Activated CD4-positive, alpha-beta T cell treated with anti-CD3 and anti-CD28 coated beads for 36 hours (primary cell): ENCODE measurements at regions of chr3 and their contacts with region 1.

Region 1: DNA sequence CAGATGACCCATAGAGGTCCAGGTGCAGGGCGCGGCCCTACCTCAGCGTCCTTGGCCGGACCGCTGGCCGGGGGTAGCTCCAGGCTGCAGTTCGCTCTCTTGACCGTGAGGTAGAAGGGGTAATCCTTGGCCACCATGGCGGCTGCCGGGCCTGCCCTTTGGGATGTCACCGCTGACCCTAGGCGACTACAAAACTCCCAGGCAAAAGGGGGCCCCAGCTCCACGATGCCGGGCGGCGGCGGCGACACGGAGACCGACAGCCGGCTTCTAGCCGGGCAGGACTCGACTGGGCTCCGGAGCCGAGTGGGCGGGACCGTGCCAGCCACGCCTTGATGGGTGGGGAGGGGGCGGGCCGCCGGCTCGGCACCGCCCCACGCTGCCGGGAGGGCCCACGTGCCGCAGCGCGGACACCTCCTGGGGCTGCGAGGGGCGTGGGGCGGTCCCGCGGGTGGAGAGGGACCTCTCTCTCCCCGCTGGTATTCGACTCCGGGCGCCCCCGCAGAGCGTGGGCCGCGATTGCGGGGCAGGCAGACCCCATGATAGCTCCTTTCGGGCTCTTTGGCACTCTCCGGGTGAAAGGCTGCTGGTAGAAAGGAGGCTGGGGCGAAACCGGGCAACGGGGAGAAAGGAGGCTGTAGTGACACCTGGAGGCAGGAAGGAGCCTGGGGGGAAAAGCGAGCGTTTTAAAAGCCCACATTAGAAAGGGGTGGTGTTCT is at the start of gene ARHGEF3:
- DNase-seq: peak; percentile 94
- ATAC-seq: peak; percentile 78
- H3K4me3 Mint-ChIP-seq: peak within 1 kb of the TSS; percentile 92
- H3K27ac Mint-ChIP-seq: peak within 1 kb of the TSS; percentile 86
- H3K4me1 Mint-ChIP-seq: peaks cover 32% of the 10 kb centered on the region
- H3K27me3 Mint-ChIP-seq: no peaks in the 10 kb centered on the region
- total RNA-seq, gene ARHGEF3: 34.4 to 38.3 TPM

Region 2: DNA sequence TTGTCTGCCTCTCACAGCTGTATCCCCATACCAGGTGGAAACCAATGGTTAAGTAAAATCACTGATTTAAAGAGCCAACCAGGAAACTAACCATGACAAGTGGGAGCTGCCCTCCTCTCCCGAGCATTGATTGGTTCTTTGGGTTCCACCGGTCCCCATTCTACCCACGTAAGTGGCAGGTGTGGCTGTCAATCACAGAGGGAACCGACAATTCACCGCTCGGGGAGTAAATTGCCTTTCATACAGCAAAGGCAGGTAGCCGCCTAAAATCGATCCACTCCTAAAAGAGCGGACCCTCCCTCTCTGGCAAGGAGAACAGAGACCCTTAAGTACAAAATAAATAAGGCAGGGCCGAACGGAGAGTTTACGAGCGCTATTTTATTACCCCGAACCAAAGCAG is 334.7 kb before region 1 on chr3:
- CTCF ChIA-PET with region 1: no interaction called
- POLR2A ChIA-PET with region 1: no interaction called
- intact Hi-C with region 1: no loop called
- DNase-seq: peak; percentile 70
- ATAC-seq: peak; percentile 86
- H3K4me3 Mint-ChIP-seq: peak overlapping the region; percentile 67
- H3K27ac Mint-ChIP-seq: no peak overlapping the region
- H3K4me1 Mint-ChIP-seq: peaks cover 4% of the 10 kb centered on the region
- H3K27me3 Mint-ChIP-seq: peaks cover 50% of the 10 kb centered on the region

Region 3: GRCh38 chr3:56702490-56703315 is 99.1 kb before region 1 on chr3:
- CTCF ChIA-PET with region 1: interaction called, 217 read pairs
- POLR2A ChIA-PET with region 1: interaction called, 3 read pairs
- intact Hi-C with region 1: loop called (anchors 1 kb)
- DNase-seq: peak; percentile 60
- ATAC-seq: peak; percentile 64
- H3K4me3 Mint-ChIP-seq: no peak overlapping the region
- H3K27ac Mint-ChIP-seq: no peak overlapping the region
- H3K4me1 Mint-ChIP-seq: peaks cover 21% of the 10 kb centered on the region
- H3K27me3 Mint-ChIP-seq: no peaks in the 10 kb centered on the region

Region 4: GRCh38 chr3:56753206-56753820 is 48.5 kb before region 1 on chr3:
- CTCF ChIA-PET with region 1: interaction called, 89 read pairs
- POLR2A ChIA-PET with region 1: interaction called, 7 read pairs
- intact Hi-C with region 1: loop called (anchors 1 kb)
- DNase-seq: peak; percentile 66
- ATAC-seq: peak; percentile 98
- H3K4me3 Mint-ChIP-seq: peak overlapping the region; percentile 21
- H3K27ac Mint-ChIP-seq: peak overlapping the region; percentile 70
- H3K4me1 Mint-ChIP-seq: peaks cover 59% of the 10 kb centered on the region
- H3K27me3 Mint-ChIP-seq: no peaks in the 10 kb centered on the region

Region 5: DNA sequence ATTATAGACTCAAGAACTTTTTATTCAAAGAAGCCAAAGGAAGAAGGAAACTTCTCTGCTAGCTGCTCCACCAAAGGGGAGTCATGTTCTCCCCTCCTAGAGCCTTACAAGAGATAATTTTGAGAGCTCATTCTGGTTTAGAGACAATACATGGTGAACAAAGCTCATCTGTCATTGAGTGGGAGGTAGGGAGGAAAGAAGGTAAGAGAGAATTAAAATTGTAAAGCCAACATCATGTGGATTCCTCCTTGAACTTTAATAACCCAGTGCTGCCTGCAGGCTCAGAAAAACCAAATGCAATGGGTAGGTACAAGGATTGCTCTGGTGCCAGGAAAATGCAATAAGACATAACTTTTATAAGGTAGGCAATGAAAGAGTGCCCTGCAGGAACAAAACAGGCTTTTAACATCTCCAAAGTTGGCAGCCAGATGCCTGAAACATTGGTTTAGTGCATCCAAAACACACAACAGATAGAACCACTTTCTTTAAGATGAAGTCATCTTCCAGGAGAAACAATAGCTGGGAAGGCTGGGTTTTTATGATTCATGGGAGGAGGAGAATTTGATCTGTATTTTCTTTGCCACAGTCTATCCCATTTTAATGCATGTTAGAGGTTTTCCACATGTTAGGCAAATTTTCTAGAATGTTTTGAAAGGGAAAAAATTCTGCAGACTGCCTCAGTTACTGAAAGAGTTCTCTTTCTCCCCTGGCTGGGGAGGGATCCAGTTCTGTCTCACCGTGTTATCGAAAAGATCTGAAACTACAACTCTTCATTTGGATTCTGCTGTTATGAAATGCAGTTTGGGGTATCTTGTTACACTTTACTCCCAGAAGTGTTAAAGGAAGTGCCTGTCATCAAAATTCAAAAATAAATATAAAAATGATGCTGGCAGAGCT is 11.2 kb after region 1 on chr3:
- CTCF ChIA-PET with region 1: interaction called, 33 read pairs
- POLR2A ChIA-PET with region 1: interaction called, 4 read pairs
- intact Hi-C with region 1: no loop called
- DNase-seq: no peak
- ATAC-seq: no peak
- H3K4me3 Mint-ChIP-seq: peak overlapping the region; percentile 3
- H3K27ac Mint-ChIP-seq: peak overlapping the region; percentile 17
- H3K4me1 Mint-ChIP-seq: peaks cover 60% of the 10 kb centered on the region
- H3K27me3 Mint-ChIP-seq: no peaks in the 10 kb centered on the region

Region 6: GRCh38 chr3:56915966-56916586 is 114.3 kb after region 1 on chr3:
- CTCF ChIA-PET with region 1: interaction called, 48 read pairs
- POLR2A ChIA-PET with region 1: interaction called, 5 read pairs
- intact Hi-C with region 1: loop called (anchors 1 to 2 kb)
- DNase-seq: peak; percentile 87
- ATAC-seq: peak; percentile 86
- H3K4me3 Mint-ChIP-seq: peak overlapping the region; percentile 73
- H3K27ac Mint-ChIP-seq: peak overlapping the region; percentile 79
- H3K4me1 Mint-ChIP-seq: peaks cover 68% of the 10 kb centered on the region
- H3K27me3 Mint-ChIP-seq: no peaks in the 10 kb centered on the region

Region 7: GRCh38 chr3:57086201-57086600 is 284.4 kb after region 1 on chr3:
- CTCF ChIA-PET with region 1: no interaction called
- POLR2A ChIA-PET with region 1: no interaction called
- intact Hi-C with region 1: no loop called
- DNase-seq: no peak
- ATAC-seq: no peak
- H3K4me3 Mint-ChIP-seq: no peak overlapping the region
- H3K27ac Mint-ChIP-seq: no peak overlapping the region
- H3K4me1 Mint-ChIP-seq: no peaks in the 10 kb centered on the region
- H3K27me3 Mint-ChIP-seq: peaks cover 11% of the 10 kb centered on the region

Region 8: GRCh38 chr3:57597122-57597923 is 795.5 kb after region 1 on chr3 and contains the start of gene ARF4:
- CTCF ChIA-PET with region 1: interaction called, 3 read pairs
- POLR2A ChIA-PET with region 1: no interaction called
- intact Hi-C with region 1: loop called in 1 of 2 experiments (anchors 5 kb)
- DNase-seq: peak; percentile 99
- ATAC-seq: peak; percentile 94
- H3K4me3 Mint-ChIP-seq: peak within 1 kb of the TSS; percentile 98
- H3K27ac Mint-ChIP-seq: peak within 1 kb of the TSS; percentile 99
- H3K4me1 Mint-ChIP-seq: peaks cover 30% of the 10 kb centered on the region
- H3K27me3 Mint-ChIP-seq: no peaks in the 10 kb centered on the region
- total RNA-seq, gene ARF4: 49.6 to 50.0 TPM